GM18951 (cell line): ENCODE measurements at regions of chr22 and their contacts with region 1.

Region 1: GRCh38 chr22:25334162-25334490 is 114.7 kb downstream of the CRYBB2 start:
- POLR2A ChIP-seq: no peak

Region 2: DNA sequence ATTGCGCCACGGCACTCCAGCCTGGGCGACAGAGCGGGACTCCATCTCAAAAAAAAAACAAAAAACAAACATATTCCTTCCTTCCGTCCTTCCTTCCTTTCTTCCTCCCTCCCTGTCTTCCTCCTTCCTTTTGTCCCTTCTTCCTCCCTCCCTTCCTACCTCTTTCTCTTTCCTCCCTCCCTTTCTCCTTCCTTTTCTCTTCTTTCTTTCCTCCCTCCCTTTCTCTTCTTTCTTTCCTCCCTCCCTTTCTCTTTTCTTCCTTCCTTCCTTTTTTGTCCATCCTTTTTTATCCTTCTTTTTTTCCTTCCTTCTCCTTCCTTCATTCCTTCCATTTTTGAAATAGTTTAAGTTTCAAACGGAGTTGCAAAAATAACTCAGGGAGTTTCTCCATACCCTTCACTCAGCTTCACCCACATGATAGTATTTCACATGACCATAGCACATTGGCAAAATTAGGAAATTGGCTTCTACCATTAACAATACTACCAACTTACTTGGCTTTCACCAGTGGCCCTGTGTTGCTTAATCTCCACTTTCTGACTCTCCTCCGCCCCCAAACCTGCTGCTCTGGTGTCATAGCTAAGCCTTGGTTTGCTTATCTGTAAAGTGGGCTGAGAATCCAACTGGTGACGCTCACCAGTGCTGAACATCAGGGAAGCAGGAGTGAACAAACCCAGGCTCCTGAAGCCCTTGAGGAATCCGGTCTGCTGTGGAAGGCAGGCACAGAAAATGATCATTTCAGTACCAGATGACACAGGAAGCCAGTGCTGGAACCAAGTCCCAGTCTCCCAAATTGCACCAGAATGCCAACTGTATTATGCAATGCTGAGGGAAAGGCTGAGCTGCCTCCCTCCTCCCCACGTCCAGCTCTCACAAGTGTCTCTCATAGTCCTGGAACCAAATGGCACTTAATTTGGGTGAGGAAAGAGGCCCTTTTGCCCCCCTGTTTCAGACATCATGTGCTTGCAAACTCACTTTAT is 151.7 kb before region 1 on chr22:
- in situ Hi-C with region 1: no loop called
- POLR2A ChIP-seq: no peak

Region 3: DNA sequence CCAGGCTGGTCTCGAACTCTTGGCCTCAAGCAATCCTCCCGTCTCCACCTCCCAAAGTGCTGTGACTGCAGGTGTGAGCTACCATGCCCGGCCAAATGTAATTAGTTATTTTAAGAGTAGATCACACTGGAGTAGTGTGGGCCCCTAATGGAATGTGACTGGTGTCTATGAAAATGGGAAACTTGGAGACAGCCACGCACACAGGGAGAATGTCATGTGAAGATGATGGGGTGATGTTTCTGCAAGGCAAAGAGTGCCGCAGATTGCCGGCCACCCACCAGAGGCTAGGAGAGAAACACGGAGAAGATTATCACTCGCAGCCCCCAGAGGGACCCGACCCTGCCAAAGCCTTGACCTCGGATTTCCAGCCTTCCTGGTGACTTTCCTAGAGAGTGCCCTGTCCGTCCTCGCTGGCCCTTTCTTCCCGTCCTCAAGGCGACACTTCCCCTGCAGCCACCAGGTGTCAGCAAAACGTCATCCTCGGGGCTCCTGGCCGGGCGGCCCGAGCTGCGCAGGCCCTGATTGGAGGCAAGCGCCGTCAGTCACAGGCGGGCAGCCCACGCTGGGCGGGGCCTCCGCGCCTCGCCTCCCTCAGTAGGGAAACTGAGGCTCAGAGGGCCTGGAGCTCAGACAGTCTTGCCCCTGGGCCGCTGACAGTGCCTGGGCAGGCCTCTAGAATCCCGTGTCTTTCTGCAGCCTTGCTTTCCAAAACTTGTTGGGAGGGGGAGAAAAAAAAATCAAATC is 98.4 kb before region 1 on chr22:
- in situ Hi-C with region 1: loop called (anchors 25 kb)
- POLR2A ChIP-seq: no peak